ENCODE measurements at regions of chr22 and their contacts with region 1.

Region 1: DNA sequence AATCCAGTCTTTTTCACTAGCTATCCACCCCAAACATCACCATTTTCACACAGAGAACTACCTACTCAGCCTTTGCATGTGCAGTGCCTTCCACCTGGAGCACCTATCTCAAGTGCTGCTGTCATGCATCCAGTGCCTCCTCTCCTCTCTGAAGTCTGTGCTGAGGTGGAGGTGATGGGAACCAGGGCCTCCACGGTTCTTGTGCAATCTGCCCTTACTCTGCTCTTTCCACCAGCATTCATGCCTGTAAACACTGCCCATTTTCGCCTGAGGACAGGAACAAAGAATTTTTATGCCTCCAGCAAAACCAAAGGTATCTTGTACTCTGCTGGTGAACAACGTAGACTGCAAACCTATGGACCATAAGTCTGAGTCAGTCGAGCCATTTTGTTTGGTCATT is 27.0 kb downstream of the PITPNB start:
- DNase-seq: no peak
- H3K4me3 ChIP-seq: no peak overlapping the region
- H3K27ac ChIP-seq: no peak overlapping the region
- H3K4me1 ChIP-seq: peaks cover 0 to 4% (median 2%) of the 10 kb centered on the region in 3 donors
- H3K27me3 ChIP-seq: no peaks in the 10 kb centered on the region
- CTCF ChIP-seq: no peak

Region 2: GRCh38 chr22:28009272-28009827 is 117.3 kb after region 1 on chr22:
- intact Hi-C with region 1: loop called (anchors 5 kb)
- DNase-seq: peak; percentile 85 to 88 (median 85)
- H3K4me3 ChIP-seq: no peak overlapping the region
- H3K27ac ChIP-seq: no peak overlapping the region
- H3K4me1 ChIP-seq: no peaks in the 10 kb centered on the region
- H3K27me3 ChIP-seq: no peaks in the 10 kb centered on the region
- CTCF ChIP-seq: peak; percentile 94

Region 3: GRCh38 chr22:28053896-28054818 is 162.1 kb after region 1 on chr22:
- intact Hi-C with region 1: no loop called
- DNase-seq: no peak
- H3K4me3 ChIP-seq: no peak overlapping the region
- H3K27ac ChIP-seq: no peak overlapping the region
- H3K4me1 ChIP-seq: peaks cover 0 to 15% (median 6%) of the 10 kb centered on the region in 3 donors
- H3K27me3 ChIP-seq: no peaks in the 10 kb centered on the region
- CTCF ChIP-seq: no peak